Cardiac septum (tissue), 1 donor: ENCODE measurements at regions of chr12 and their contacts with region 1.

Region 1: GRCh38 chr12:25436203-25437030 is 116.7 kb downstream of the LMNTD1 start:
- DNase-seq: no peak

Region 2: GRCh38 chr12:25557830-25558436 is 121.5 kb after region 1 on chr12:
- intact Hi-C with region 1: no loop called
- DNase-seq: no peak

Region 3: GRCh38 chr12:26028953-26029735 is 592.7 kb after region 1 on chr12:
- intact Hi-C with region 1: loop called (anchors 2 kb)
- DNase-seq: no peak

Region 4: GRCh38 chr12:26091822-26092221 is 655.4 kb after region 1 on chr12:
- intact Hi-C with region 1: loop called (anchors 5 kb)
- DNase-seq: no peak